Activated T-helper 2 cell treated with anti-CD3 and anti-CD28 coated beads, Interferon-gamma antibody, Interleukin-2, Interleukin-4, amounts not matched to agents 10 μg/mL and 5 μg/mL and 100 μg/mL, durations not matched to agents 14 hours and 24 hours and 36 hours (primary cell): ENCODE measurements at regions of chr14 and their contacts with region 1.

Region 1: GRCh38 chr14:96424109-96424989 is 32.4 kb downstream of the AK7 start:
- DNase-seq: no peak
- H3K4me3 Mint-ChIP-seq: peak overlapping the region; percentile 65
- H3K27ac Mint-ChIP-seq: no peak overlapping the region
- H3K4me1 Mint-ChIP-seq: peaks cover 2% of the 10 kb centered on the region
- H3K27me3 Mint-ChIP-seq: peaks cover 10% of the 10 kb centered on the region

Region 2: DNA sequence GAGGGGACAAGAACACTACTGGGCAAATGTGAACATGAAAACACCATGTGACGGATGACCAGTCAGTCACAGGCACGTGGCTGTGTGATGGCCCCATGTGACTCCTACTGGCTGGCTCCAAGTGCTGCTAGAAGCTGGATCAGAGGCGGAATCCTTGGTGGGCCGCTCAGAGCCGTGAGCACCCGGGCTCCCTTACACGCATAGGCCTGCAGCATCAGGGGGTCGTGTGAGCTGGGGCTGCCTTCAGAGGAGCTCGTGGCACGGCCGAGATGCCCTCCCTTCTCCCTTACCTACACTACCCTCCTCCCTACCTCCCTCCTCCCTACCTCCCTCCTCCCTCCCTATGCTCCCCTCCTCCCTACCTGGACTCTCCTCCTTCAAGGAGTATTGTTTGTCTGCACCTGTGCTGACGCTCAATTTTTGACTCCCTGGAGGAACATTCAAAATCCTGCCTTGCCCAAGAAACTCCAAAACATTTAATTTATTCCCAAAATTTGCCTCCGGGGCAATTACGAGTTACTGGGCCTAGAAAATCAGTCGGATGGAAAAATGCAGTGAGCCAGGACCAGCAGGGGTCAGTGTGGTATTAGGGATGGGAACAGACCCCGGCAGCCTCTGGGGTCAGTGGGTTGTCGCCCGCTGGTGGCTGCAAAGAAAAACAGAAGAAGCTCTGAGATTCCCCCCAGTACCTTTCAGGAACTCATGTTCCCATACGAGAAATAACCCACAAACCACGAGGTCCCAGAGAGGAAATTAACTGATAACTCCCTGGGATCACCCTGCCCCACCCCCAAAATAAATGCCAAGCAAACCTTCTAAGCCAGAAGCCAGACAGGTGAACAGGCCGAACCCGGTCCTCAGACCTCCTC is 324.0 kb before region 1 on chr14:
- intact Hi-C with region 1: loop called (anchors 10 kb)
- DNase-seq: peak; percentile 19
- H3K4me3 Mint-ChIP-seq: no peak overlapping the region
- H3K27ac Mint-ChIP-seq: no peak overlapping the region
- H3K4me1 Mint-ChIP-seq: peaks cover 2% of the 10 kb centered on the region
- H3K27me3 Mint-ChIP-seq: no peaks in the 10 kb centered on the region

Region 3: GRCh38 chr14:96297000-96297399 is 127.3 kb before region 1 on chr14:
- intact Hi-C with region 1: loop called (anchors 1 kb)
- DNase-seq: no peak
- H3K4me3 Mint-ChIP-seq: no peak overlapping the region
- H3K27ac Mint-ChIP-seq: no peak overlapping the region
- H3K4me1 Mint-ChIP-seq: no peaks in the 10 kb centered on the region
- H3K27me3 Mint-ChIP-seq: no peaks in the 10 kb centered on the region